GM12878 (cell line): ENCODE measurements at regions of chr6 and their contacts with region 1.

Region 1: DNA sequence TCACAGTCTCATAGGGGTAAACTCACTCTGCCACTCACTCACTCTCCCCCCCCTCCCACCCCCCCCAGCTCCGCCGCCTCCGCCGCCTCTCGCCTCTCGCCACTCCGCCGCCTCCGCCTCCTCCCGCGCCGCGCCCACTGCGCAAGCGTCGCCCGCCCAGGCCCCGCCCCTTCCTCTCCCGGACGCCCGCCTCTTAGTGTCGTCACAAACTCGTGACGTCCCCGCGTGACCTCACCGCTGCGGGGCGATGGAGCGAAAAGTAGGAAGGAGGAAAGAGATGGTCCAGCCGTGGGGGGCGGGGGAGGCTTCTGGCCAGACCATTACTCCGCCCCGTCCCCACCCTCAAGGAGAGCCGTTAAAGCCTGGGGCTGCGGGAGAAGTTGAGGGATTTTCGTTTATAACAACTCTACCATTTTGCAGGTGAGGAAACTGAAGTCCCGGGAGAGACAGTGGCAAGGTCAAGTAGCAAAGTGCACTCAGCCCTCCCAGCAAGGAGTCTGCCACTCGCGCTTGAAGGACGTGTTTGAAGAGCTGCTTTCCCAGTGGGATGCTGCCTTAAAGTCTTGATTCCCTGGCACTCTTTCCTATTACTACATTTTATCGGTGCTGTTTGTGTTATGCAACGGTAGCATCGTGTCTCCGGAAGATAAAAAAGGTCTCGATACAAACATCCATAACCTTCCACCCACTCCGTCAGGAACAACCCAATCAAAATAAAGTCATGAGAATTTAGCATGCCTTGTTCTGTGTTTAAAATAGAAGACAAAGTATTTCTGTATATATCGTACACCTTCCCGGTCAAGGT is at the start of gene ILRUN:
- DNase-seq: peak; percentile 76
- ATAC-seq: peak; percentile 79
- H3K4me3 ChIP-seq: peak within 1 kb of the TSS; percentile 94
- H3K27ac ChIP-seq: peak within 1 kb of the TSS; percentile 94
- H3K4me1 ChIP-seq: no peaks in the 10 kb centered on the region; the same call in 1 of the 2 replicates
- H3K27me3 ChIP-seq: no peaks in the 10 kb centered on the region
- CTCF ChIP-seq: no peak
- EP300 ChIP-seq: no peak
- POLR2A ChIP-seq: peak; percentile 59
- RAD21 ChIP-seq: no peak
- polyA plus RNA-seq, gene ILRUN: 21.0 to 27.2 TPM

Region 2: DNA sequence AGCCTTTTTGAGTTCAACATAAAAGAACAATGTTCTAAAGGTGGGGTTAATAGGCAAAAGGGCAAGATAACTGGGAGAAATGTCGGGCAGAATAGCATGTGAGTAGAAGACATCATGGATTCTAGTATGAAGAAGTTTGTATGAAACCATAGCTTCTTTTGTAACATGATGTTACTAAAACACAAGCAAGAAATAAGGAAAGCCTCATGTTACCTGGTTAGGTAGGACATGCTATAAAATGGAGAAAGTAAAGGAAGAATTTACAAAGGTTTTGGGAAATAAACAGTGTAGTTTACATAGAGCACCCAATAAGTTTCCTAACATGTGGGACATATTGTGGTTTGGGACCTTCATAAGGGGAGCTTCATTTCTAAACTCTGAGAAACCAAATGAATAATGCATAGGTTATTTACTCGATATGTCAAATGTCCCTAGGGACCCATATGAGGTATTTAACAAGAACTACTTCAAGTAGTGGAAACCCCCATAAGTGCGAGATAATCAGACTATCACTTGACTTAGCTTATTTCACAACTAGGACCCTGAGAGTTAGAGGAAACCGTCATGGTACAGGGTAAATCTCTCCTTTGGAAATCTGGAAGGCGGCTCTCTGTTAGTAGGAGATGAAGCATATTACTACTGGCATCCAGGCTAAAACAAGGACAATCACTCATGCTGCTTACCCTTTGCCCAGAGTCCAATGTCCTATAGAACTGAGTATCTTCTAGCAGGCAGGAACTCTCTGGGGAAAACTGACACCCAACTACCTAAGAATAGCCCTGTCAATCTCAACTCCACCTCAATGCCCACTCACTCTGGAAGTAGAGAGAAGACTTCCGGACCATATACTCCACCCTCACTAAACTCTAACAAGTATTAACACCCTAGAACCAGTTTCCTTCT is 57.9 kb before region 1 on chr6:
- CTCF ChIA-PET with region 1: interaction called, 10 read pairs
- POLR2A ChIA-PET with region 1: interaction called, 19 read pairs
- RAD21 ChIA-PET with region 1: interaction called, 14 read pairs
- SMC1A ChIA-PET with region 1: interaction called, 13 read pairs
- in situ Hi-C with region 1: no loop called
- intact Hi-C with region 1: loop called (anchors 5 kb)
- DNase-seq: peak; percentile 87
- ATAC-seq: peak; percentile 86
- H3K4me3 ChIP-seq: no peak overlapping the region
- H3K27ac ChIP-seq: peak overlapping the region; percentile 93
- H3K4me1 ChIP-seq: peaks cover 27% of the 10 kb centered on the region
- H3K27me3 ChIP-seq: no peaks in the 10 kb centered on the region
- CTCF ChIP-seq: no peak
- EP300 ChIP-seq: peak; percentile 79 to 80
- POLR2A ChIP-seq: no peak
- RAD21 ChIP-seq: no peak

Region 3: GRCh38 chr6:34664256-34664971 is 32.5 kb before region 1 on chr6:
- CTCF ChIA-PET with region 1: no interaction called
- POLR2A ChIA-PET with region 1: interaction called, 47 read pairs
- RAD21 ChIA-PET with region 1: interaction called, 3 read pairs
- SMC1A ChIA-PET with region 1: interaction called, 44 read pairs
- in situ Hi-C with region 1: no loop called
- intact Hi-C with region 1: no loop called
- DNase-seq: no peak
- ATAC-seq: no peak
- H3K4me3 ChIP-seq: peak overlapping the region; percentile 2; the same call in 1 of the 2 replicates
- H3K27ac ChIP-seq: peak overlapping the region; percentile 84
- H3K4me1 ChIP-seq: peaks cover 48% of the 10 kb centered on the region
- H3K27me3 ChIP-seq: no peaks in the 10 kb centered on the region
- CTCF ChIP-seq: no peak
- EP300 ChIP-seq: no peak
- POLR2A ChIP-seq: no peak
- RAD21 ChIP-seq: no peak

Region 4: DNA sequence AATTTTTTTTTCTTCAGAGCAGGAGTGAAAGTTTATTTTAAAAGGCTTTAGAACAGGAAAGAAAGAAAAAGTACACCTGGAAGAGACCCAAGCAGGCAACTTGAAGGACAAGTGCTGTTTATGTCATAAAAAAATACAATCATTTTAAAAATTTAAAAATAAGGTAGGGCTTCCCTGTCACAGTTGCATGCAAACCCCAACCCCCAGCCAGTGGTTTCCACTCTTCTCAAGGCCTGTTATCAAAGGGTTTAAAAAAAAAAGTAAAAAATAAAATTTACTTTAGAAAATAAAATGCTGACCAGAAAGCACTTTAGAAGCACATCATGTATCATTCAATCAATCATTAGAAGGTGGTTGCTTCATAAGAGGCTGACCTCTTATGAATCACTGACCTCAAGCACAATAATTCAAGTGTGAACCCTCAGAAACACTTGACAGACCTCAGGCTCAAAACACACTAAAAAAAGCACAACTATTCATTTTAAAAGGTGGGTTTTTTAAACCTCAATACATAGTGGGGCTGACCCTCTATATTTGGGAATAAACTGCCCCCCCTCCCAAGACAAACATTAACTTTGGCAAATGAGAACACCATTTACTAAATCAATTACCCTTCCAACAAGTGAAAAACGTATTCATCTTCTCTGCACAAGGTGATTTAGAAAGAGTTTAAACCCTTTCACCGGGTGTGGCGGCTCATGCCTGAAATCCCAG is 16.0 kb before region 1 on chr6:
- CTCF ChIA-PET with region 1: interaction called, 5 read pairs
- POLR2A ChIA-PET with region 1: interaction called, 41 read pairs
- RAD21 ChIA-PET with region 1: interaction called, 60 read pairs
- SMC1A ChIA-PET with region 1: interaction called, 100 read pairs
- in situ Hi-C with region 1: no loop called
- intact Hi-C with region 1: no loop called
- DNase-seq: no peak
- ATAC-seq: peak; percentile 85
- H3K4me3 ChIP-seq: peak overlapping the region; percentile 49; the same call in 1 of the 2 replicates
- H3K27ac ChIP-seq: peak overlapping the region; percentile 88
- H3K4me1 ChIP-seq: peaks cover 20% of the 10 kb centered on the region; the same call in 1 of the 2 replicates
- H3K27me3 ChIP-seq: no peaks in the 10 kb centered on the region
- CTCF ChIP-seq: no peak
- EP300 ChIP-seq: peak; percentile 59 to 78; a peak in 2 of 4 replicates
- POLR2A ChIP-seq: no peak
- RAD21 ChIP-seq: no peak

Region 5: GRCh38 chr6:34810936-34811632 is 114.1 kb after region 1 on chr6:
- CTCF ChIA-PET with region 1: no interaction called
- POLR2A ChIA-PET with region 1: no interaction called
- RAD21 ChIA-PET with region 1: no interaction called
- SMC1A ChIA-PET with region 1: no interaction called
- in situ Hi-C with region 1: no loop called
- intact Hi-C with region 1: loop called (anchors 5 kb)
- DNase-seq: peak; percentile 84
- ATAC-seq: peak; percentile 99
- H3K4me3 ChIP-seq: no peak overlapping the region; the same call in 1 of the 2 replicates
- H3K27ac ChIP-seq: peak overlapping the region; percentile 79
- H3K4me1 ChIP-seq: peaks cover 33% of the 10 kb centered on the region
- H3K27me3 ChIP-seq: no peaks in the 10 kb centered on the region
- CTCF ChIP-seq: no peak
- EP300 ChIP-seq: peak; percentile 60; a peak in 3 of 4 replicates
- POLR2A ChIP-seq: no peak
- RAD21 ChIP-seq: no peak